GM18951 (cell line): ENCODE measurements at regions of chr9 and their contacts with region 1.

Region 1: DNA sequence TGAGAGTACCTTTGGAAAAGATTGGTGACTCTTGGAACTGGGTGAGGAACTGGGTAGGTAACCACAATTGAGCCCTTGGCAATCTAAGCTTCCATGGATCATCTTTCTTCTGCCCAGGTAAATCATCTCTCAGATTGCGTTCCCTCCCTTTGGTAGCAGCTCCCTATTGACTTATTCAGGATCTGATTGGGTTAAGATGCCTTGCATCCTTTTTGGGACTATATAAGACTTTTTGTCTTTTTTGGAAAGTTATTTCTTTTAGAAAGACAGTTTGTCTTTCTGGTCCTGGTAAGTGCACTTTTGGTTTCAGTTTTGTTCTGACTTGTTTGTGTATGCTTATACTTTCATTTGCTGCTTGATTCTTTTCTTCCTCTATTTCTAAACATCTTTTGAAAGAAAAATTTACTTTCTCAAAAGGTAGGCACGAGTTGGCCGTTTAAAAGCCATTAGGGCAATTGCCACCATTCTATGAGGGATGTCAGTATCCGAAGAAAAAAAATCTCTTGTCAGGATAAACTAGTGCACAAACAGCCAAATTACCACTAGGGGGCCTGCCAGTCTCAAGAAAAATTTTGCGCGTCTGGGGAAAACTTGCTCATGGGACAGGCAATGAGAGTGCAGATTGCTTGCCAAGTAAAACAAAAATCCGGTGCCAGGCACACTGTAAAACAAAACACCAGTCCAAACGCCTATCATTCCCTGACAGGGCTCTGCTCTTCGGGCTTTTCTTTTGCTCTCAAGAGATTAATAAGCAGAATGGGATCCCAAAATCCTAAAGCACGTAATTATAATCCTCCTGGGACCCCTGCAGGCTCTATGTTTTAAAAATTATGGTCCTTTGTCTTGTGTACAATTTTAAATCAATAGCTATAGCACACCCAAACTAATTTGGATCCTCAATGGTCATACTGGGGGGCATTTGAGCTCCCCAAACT is 12.8 kb downstream of the OR1J1 start:
- POLR2A ChIP-seq: no peak

Region 2: GRCh38 chr9:122810306-122810946 is 345.5 kb after region 1 on chr9:
- in situ Hi-C with region 1: loop called (anchors 10 kb)
- POLR2A ChIP-seq: no peak

Region 3: DNA sequence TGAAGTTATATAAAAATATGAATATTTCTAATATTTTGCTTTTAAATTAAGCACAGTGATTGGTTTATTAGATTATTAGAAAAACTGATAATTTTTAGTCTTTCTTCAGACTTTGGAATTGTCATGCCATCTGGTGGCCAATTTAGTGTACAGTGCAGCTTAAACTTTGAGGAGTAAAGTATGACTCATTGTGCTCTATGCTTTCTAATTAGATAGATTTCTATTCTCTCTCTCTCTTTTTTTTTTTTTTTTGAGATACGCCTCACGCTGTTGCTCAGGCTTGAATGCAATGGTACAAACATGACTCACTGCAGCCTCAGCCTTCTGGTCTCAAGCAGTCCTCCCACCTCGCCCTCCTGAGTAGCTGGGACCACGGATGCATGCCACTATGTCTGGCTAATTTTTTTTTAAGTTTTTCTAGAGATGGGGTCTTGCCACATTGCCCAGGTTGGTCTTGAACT is 526.5 kb after region 1 on chr9:
- in situ Hi-C with region 1: loop called (anchors 25 kb)
- POLR2A ChIP-seq: no peak

Region 4: GRCh38 chr9:123349691-123350480 is 885.0 kb after region 1 on chr9:
- in situ Hi-C with region 1: loop called (anchors 25 kb)
- POLR2A ChIP-seq: no peak